Natural killer cell (primary cell): ENCODE measurements at regions of chr19 and their contacts with region 1.

Region 1: GRCh38 chr19:40348125-40348913 is at the starts of genes C19orf47 and PLD3:
- DNase-seq: peak; percentile 96 to 99
- ATAC-seq: peak; percentile 91 to 98 (median 93)
- H3K4me3 ChIP-seq: peak within 1 kb of the TSS; percentile 63
- H3K4me3 Mint-ChIP-seq: peak within 1 kb of the TSS; percentile 89
- H3K27ac ChIP-seq: peak within 1 kb of the TSS; percentile 68
- H3K27ac Mint-ChIP-seq: peak within 1 kb of the TSS; percentile 79 to 87
- H3K4me1 ChIP-seq: peaks cover 18% of the 10 kb centered on the region
- H3K4me1 Mint-ChIP-seq: peaks cover 27 to 31% of the 10 kb centered on the region in 2 donors
- H3K27me3 ChIP-seq: no peaks in the 10 kb centered on the region
- H3K27me3 Mint-ChIP-seq: no peaks in the 10 kb centered on the region
- CTCF ChIP-seq: no peak
- total RNA-seq, gene C19orf47: 15.2 to 20.2 (median 16.1) TPM
- total RNA-seq, gene PLD3: 107 to 140 (median 109) TPM

Region 2: GRCh38 chr19:40285353-40286234 is 62.7 kb before region 1 on chr19:
- intact Hi-C with region 1: loop called (anchors 5 kb)
- DNase-seq: peak; percentile 95 to 100
- ATAC-seq: peak; percentile 77 to 93 (median 84)
- H3K4me3 ChIP-seq: peak overlapping the region; percentile 72
- H3K4me3 Mint-ChIP-seq: peak overlapping the region; percentile 87
- H3K27ac ChIP-seq: peak overlapping the region; percentile 98
- H3K27ac Mint-ChIP-seq: peak overlapping the region; percentile 99
- H3K4me1 ChIP-seq: peaks cover 47% of the 10 kb centered on the region
- H3K4me1 Mint-ChIP-seq: peaks cover 31 to 51% of the 10 kb centered on the region in 2 donors
- H3K27me3 ChIP-seq: no peaks in the 10 kb centered on the region
- H3K27me3 Mint-ChIP-seq: no peaks in the 10 kb centered on the region
- CTCF ChIP-seq: no peak

Region 3: GRCh38 chr19:40444192-40445028 is 96.1 kb after region 1 on chr19 and contains the start of gene SERTAD3:
- intact Hi-C with region 1: loop called (anchors 1 kb)
- DNase-seq: peak; percentile 98
- ATAC-seq: peak; percentile 70 to 87 (median 74)
- H3K4me3 ChIP-seq: peak within 1 kb of the TSS; percentile 91
- H3K4me3 Mint-ChIP-seq: peak within 1 kb of the TSS; percentile 98
- H3K27ac ChIP-seq: peak within 1 kb of the TSS; percentile 89
- H3K27ac Mint-ChIP-seq: peak within 1 kb of the TSS; percentile 92 to 97
- H3K4me1 ChIP-seq: peaks cover 13% of the 10 kb centered on the region
- H3K4me1 Mint-ChIP-seq: peaks cover 25 to 29% of the 10 kb centered on the region in 2 donors
- H3K27me3 ChIP-seq: no peaks in the 10 kb centered on the region
- H3K27me3 Mint-ChIP-seq: no peaks in the 10 kb centered on the region
- CTCF ChIP-seq: no peak
- total RNA-seq, gene SERTAD3: 57.3 to 102 (median 83.3) TPM